GM10248 (cell line): ENCODE measurements at regions of chr3 and their contacts with region 1.

Region 1: GRCh38 chr3:159884661-159885402 is 103.8 kb upstream of the IL12A start:
- DNase-seq: peak; percentile 58
- CTCF ChIP-seq: peak; percentile 56

Region 2: GRCh38 chr3:159852821-159853505 is 31.9 kb before region 1 on chr3:
- CTCF ChIA-PET with region 1: interaction called, 45 read pairs
- POLR2A ChIA-PET with region 1: no interaction called
- DNase-seq: no peak
- CTCF ChIP-seq: no peak

Region 3: DNA sequence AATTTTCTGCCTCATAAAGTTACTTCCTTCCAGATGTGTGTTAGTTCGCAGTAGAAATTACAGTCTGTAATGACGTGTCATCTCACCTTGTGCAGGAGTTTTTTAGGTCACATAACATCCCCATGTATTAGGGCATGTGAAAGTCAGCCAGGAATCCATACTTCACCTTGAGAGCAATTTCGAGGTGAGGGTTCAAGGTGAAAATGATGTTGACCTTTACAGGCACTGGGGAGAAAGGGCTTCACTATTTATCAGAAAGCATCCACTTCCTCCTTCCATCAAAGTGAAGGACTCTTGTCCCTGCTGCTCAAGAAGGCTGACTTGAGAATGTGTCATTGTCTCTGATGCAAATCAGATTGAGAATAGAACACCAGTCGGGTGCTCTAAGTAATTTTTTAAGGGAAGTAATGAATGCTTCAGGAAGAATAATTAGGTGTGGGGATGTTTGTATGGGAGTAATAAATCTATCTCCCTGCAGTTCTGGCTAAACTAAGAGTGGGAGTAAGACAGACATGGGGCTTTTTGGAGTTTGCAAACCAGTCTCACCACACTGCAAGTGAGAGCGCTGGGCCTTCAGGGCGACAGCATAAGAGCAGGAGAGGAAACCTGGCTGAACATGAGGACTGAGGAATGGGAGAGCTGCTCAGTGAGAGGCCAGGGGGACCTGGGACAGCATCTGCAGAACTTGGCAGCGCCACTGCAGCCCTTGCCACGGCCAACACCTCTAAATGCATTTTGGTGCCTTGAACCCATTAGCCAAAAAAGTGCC is 17.9 kb after region 1 on chr3:
- CTCF ChIA-PET with region 1: interaction called, 177 read pairs
- POLR2A ChIA-PET with region 1: no interaction called
- DNase-seq: peak; percentile 28
- CTCF ChIP-seq: no peak

Region 4: DNA sequence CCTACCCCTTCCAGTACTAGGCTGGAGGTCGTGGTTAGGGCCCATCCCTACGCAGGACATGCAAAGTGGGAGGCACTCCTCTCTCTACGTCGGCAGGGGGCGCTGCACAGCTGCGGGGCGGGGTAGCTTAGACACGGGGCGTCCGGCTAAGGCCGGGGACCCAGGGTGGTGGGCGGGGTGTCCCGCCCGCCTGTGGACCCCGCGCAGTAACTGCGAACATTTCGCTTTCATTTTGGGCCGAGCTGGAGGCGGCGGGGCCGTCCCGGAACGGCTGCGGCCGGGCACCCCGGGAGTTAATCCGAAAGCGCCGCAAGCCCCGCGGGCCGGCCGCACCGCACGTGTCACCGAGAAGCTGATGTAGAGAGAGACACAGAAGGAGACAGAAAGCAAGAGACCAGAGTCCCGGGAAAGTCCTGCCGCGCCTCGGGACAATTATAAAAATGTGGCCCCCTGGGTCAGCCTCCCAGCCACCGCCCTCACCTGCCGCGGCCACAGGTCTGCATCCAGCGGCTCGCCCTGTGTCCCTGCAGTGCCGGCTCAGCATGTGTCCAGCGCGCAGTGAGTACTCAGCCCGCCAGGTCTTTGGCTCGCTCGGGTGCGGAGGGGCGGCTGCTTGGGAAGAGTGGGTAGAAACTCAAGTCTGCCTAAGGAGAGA is 103.9 kb after region 1 on chr3 and contains the start of gene IL12A:
- CTCF ChIA-PET with region 1: interaction called, 104 read pairs
- POLR2A ChIA-PET with region 1: no interaction called
- DNase-seq: peak; percentile 91
- CTCF ChIP-seq: peak; percentile 95

Region 5: GRCh38 chr3:160016972-160017371 is 132.1 kb after region 1 on chr3:
- CTCF ChIA-PET with region 1: interaction called, 394 read pairs
- POLR2A ChIA-PET with region 1: no interaction called
- DNase-seq: no peak
- CTCF ChIP-seq: no peak

Region 6: GRCh38 chr3:160413613-160414248 is 528.9 kb after region 1 on chr3:
- CTCF ChIA-PET with region 1: interaction called, 10 read pairs
- POLR2A ChIA-PET with region 1: no interaction called
- DNase-seq: peak; percentile 45
- CTCF ChIP-seq: peak; percentile 70